ENCODE measurements at regions of chr7 and their contacts with region 1.

Region 1: DNA sequence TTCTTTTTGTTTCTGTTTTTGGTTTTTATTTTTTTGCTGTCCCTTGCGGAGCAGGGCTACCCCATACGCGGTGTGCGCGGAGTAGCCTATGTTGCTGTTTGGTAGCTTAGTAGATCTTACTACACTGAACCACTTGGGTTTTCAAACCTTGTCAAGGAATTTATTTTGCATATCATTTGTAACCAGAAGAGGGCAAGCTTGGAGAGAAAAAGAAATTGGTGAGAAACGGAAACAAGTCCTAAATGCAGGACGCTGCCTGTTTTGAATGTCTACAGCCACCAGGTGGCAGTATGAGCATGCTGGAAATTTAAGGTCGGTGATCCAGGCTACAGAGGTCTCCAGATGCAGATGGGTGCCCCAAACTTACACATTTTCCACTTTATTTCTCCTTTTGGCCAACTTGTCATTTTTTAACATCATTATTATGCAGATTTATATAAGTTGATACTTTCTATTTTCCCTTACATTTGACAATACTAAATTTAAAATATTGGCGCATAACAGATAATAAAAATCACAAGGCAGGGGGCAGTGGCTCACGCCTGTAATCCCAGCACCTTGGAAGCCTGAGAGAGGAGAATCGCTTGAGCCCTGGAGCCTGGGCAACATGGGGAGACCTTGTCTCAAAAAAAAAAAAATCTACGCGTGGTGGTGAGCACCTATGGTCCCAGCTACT is 15.3 kb upstream of the TRA2A start:
- DNase-seq: peak; percentile 86
- ATAC-seq: peak; percentile 82
- H3K4me3 Mint-ChIP-seq: no peak overlapping the region
- H3K27ac Mint-ChIP-seq: no peak overlapping the region
- H3K4me1 Mint-ChIP-seq: peaks cover 11% of the 10 kb centered on the region
- H3K27me3 Mint-ChIP-seq: peaks cover 2% of the 10 kb centered on the region

Region 2: DNA sequence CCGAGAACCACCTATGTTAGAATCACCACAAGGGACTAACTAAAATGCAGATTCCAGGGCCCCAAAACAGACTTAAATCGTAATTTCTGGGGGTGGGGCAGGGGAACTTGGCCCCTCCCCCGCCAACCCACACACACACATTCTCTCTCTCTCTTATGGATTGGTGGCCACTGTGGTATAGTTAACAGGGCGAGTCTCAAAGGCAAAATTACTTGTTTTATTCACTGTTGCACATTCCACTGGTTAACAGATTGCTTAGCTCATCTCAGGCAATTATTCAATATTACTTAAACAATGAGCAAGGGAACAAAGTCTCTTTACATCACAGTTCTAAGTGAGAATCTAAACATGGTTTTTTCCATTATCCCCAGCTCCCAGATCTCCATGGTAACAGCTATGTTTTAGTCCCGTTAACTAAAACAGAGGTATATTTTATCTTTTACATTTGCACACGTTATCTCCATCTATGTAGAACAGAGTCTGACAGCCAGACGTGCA is 115.3 kb before region 1 on chr7:
- CTCF ChIA-PET with region 1: interaction called, 12 read pairs
- POLR2A ChIA-PET with region 1: no interaction called
- DNase-seq: no peak
- ATAC-seq: no peak
- H3K4me3 Mint-ChIP-seq: no peak overlapping the region
- H3K27ac Mint-ChIP-seq: no peak overlapping the region
- H3K4me1 Mint-ChIP-seq: no peaks in the 10 kb centered on the region
- H3K27me3 Mint-ChIP-seq: peaks cover 17% of the 10 kb centered on the region

Region 3: DNA sequence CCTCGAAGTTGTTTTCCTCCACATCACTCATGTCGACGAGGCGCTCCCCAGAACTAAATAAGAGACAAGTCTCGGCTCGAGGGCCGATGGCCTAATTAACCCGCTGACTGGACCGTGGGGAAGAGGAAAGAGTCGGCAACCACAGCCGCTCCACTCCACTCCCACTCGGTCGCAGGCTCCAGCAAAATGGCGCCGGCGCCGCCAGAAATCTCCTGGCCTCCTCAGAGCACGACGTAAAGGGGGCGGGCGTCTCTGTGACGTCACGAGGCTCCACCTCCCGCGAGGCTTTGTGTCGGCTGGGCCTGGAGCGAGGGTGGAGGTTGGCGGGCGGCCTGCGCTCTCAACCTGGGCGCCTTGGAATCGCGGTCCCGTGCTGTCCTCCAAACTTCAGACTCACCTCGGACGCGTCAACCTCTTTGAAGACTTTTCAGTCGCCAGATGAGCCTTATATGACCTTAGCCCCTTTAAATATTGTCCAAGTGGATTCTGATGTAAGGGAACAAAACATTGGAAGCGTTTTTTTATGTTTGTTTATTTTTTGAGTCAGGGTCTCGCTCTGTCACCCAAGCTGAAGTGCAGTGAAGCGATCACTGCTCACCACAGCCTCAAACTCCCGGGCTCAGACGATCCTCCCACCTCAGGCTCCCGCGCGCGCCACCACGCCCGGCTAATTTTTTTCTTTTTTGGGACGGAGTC is 15.1 kb before region 1 on chr7 and contains the start of gene TRA2A:
- CTCF ChIA-PET with region 1: interaction called, 31 read pairs
- POLR2A ChIA-PET with region 1: interaction called, 4 read pairs
- DNase-seq: peak; percentile 98
- ATAC-seq: peak; percentile 94
- H3K4me3 Mint-ChIP-seq: peak within 1 kb of the TSS; percentile 100
- H3K27ac Mint-ChIP-seq: peak within 1 kb of the TSS; percentile 100
- H3K4me1 Mint-ChIP-seq: peaks cover 42% of the 10 kb centered on the region
- H3K27me3 Mint-ChIP-seq: no peaks in the 10 kb centered on the region
- total RNA-seq, gene TRA2A: 108 to 113 TPM

Region 4: GRCh38 chr7:23597094-23598091 is 50.4 kb after region 1 on chr7 and contains the start of gene CCDC126:
- CTCF ChIA-PET with region 1: interaction called, 19 read pairs
- POLR2A ChIA-PET with region 1: no interaction called
- DNase-seq: peak; percentile 86
- ATAC-seq: peak; percentile 97
- H3K4me3 Mint-ChIP-seq: peak within 1 kb of the TSS; percentile 78
- H3K27ac Mint-ChIP-seq: peak within 1 kb of the TSS; percentile 45
- H3K4me1 Mint-ChIP-seq: peaks cover 34% of the 10 kb centered on the region
- H3K27me3 Mint-ChIP-seq: no peaks in the 10 kb centered on the region
- total RNA-seq, gene CCDC126: 6.2 to 6.3 TPM

Region 5: DNA sequence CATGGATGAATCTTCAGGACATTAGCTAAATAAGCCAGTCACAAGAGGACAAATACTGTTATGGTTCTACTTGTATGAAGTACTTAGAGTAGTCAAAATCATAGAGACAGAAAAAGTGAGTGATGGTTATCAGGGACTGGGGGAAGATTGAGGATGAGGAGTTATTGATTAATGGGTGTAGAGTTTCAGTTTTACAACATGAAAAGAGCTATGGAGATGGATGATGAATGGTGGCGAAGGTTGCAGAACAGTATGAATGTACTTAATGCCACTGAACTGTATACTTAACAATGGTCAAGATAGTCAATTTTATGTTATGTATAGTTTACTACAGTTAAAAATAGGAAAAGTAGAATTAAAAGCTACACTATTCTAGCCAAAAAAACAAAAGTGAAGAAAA is 170.8 kb after region 1 on chr7:
- CTCF ChIA-PET with region 1: interaction called, 42 read pairs
- POLR2A ChIA-PET with region 1: no interaction called
- DNase-seq: no peak
- ATAC-seq: no peak
- H3K4me3 Mint-ChIP-seq: no peak overlapping the region
- H3K27ac Mint-ChIP-seq: no peak overlapping the region
- H3K4me1 Mint-ChIP-seq: no peaks in the 10 kb centered on the region
- H3K27me3 Mint-ChIP-seq: peaks cover 3% of the 10 kb centered on the region

Region 6: DNA sequence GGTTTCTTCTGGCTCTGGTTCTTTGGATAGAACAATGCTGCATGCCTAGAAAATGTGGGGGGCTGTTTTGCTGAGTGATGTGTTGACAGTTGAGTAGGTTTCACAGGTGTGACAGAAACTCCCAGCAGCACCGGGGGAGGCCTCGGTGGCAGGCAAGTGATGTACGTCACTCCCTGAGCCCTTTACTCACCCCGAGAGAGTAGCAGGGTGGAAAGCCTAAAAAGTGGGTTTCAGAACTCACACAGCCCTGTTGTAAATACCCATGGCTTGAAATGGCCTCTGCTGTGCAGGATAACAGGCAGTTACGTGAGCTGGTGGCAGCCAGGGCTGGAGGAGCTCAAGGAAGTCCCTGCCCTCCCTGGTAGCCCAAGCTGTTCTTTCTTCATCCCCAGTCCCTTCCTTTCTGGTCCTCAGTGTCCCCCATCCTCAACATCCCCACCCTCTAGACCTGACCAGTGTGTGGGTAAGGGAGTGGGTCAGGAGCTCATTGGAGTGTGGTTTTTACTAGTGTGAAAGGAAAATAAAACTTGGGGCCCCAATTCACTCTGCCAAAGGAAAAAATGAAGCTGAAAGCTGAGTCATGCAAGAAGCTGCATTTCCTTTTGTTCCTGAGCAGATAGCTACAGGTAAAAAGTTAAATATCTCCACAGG is 421.0 kb after region 1 on chr7:
- CTCF ChIA-PET with region 1: no interaction called
- POLR2A ChIA-PET with region 1: no interaction called
- DNase-seq: no peak
- ATAC-seq: no peak
- H3K4me3 Mint-ChIP-seq: no peak overlapping the region
- H3K27ac Mint-ChIP-seq: no peak overlapping the region
- H3K4me1 Mint-ChIP-seq: no peaks in the 10 kb centered on the region
- H3K27me3 Mint-ChIP-seq: peaks cover 3% of the 10 kb centered on the region

Measured in activated CD8-positive, alpha-beta T cell treated with anti-CD3 and anti-CD28 coated beads, Interleukin-2, amount 10 ng/mL, durations not matched to agents 7 days and 5 days (primary cell).